Left lung (tissue), 14 donors: ENCODE measurements at regions of chr16 and their contacts with region 1.

Region 1: DNA sequence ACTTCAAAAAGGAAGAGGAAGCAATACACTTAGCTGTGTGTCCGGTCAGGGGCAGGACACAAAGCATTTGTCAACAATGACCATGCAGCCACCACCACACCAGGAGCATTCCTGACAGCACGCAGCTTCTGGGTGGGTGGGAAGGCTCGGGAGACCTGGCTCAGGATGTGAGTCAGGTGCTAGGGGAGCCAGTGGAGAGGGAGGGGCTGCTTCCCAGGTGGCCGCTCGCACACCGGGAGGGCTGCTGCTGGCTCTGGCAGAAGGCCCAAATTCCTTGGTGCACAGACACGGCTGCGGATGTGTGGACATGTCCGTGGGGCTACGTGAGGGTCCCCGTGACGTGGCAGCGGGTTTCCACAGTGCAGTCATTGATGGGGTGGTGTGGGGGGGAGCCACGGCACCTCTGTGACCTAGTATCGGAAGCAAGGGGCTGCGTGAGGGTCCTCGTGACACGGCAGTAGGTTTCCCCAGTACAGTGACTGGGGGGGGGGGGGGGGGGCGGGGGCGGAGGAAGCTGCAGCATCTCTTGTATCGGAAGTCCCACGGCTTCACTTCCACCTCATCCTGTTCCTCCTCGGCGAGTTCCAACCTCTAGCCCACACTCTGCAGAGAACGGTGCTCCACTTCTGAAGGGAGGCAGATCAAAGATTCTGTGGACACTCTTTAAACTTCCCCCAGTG is 112.8 kb downstream of the ZNF778 start:
- DNase-seq: peak in 2 of 4 donors; percentile 45 to 80
- ATAC-seq: peak; percentile 20
- H3K4me3 ChIP-seq: no peak overlapping the region
- H3K27ac ChIP-seq: peak overlapping the region in 1 of 2 donors; percentile 73
- H3K4me1 ChIP-seq: peaks cover 25 to 86% of the 10 kb centered on the region in 2 donors
- H3K27me3 ChIP-seq: no peaks in the 10 kb centered on the region
- CTCF ChIP-seq: no peak

Region 2: DNA sequence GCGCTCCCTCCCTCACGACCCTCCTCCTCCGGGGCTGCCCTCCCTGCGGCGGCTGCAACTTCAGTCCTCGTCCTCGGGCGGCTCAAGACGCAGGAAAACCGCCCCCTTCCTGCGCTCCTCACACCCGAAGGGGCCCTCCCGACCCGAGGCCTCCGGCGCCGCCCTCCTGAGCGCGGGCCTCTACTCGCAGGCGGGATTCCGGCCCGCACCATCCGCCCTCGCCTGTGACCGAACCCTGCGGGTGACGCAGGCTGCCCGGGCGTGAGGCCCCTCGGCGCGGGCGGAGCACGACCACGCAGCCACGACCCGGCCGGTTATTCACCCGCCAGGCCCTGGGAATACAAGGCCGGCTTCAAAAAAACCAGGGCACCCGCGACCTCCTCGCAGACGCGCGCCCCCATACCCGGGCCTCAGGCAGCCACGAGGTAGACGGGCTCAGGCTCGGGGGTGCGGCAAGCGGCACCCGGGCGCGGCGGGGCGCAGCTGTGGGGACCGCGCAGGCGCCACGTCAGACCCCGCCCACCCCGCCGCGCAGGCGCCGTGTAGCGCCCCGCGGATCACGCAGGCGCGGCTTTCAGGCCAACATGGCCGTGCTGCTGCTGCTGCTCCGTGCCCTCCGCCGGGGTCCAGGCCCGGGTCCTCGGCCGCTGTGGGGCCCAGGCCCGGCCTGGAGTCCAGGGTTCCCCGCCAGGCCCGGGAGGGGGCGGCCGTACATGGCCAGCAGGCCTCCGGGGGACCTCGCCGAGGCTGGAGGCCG is 177.7 kb after region 1 on chr16 and contains the start of gene SPG7:
- intact Hi-C with region 1: no loop called
- DNase-seq: peak; percentile 84 to 95 (median 92)
- ATAC-seq: peak; percentile 92
- H3K4me3 ChIP-seq: peak within 1 kb of the TSS; percentile 92 to 97
- H3K27ac ChIP-seq: peak within 1 kb of the TSS; percentile 82 to 96
- H3K4me1 ChIP-seq: peaks cover 22 to 54% of the 10 kb centered on the region in 2 donors
- H3K27me3 ChIP-seq: no peaks in the 10 kb centered on the region
- CTCF ChIP-seq: no peak
- polyA plus RNA-seq, gene SPG7: 113 to 148 (median 127) TPM

Region 3: GRCh38 chr16:89556750-89557689 is 226.7 kb after region 1 on chr16:
- intact Hi-C with region 1: loop called in 1 of 2 experiments (anchors 10 kb)
- DNase-seq: peak in 3 of 4 donors; percentile 65 to 92 (median 75)
- ATAC-seq: peak; percentile 39
- H3K4me3 ChIP-seq: no peak overlapping the region
- H3K27ac ChIP-seq: no peak overlapping the region
- H3K4me1 ChIP-seq: peaks cover 5 to 41% of the 10 kb centered on the region in 2 donors
- H3K27me3 ChIP-seq: no peaks in the 10 kb centered on the region
- CTCF ChIP-seq: peak; percentile 73 to 82